HepG2 (cell line): ENCODE measurements at regions of chr1 and their contacts with region 1.

Region 1: DNA sequence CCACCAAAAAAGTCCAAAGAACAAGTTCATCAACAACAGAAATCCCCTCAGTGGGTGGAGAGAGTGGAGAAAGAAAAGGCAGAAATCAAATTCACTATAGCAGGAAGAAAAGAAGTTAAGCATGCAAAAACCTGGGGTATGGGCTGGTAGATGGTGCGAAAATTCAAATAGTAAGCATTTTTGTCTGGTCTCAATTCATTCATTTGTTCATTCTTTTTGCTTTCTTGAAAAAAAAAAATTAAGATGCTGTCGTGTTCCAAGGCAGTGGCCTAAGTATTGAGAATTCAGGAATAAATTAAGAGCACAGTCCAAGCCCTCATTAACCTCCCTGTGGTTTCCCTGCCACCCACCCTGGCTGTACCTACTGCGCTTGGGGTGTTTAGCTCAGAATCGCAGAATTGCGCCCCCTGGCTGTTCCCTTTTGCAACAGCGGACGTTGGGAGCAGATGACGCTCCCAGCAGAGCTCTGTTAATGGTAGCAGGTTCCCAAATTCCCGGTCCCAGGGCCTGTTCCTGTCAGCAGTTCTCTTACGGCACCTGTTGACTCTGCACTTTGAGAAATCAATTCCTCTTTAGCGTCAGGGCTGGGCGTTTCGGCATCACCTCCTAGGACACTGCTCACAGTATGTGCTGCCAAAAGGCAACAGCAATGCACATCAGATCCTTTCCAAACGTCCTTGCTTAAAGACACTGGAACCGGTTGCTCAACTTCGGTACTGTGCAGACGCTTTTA is 34.0 kb upstream of the SSX2IP start:
- DNase-seq: peak; percentile 17
- ATAC-seq: peak; percentile 64
- H3K4me3 ChIP-seq: no peak overlapping the region
- H3K27ac ChIP-seq: no peak overlapping the region
- H3K4me1 ChIP-seq: peaks cover 45% of the 10 kb centered on the region
- H3K27me3 ChIP-seq: no peaks in the 10 kb centered on the region
- CTCF ChIP-seq: peak; percentile 65
- EP300 ChIP-seq: no peak
- POLR2A ChIP-seq: no peak
- RAD21 ChIP-seq: 0 out of 2 replicates have a peak, but pooled peaks have one; percentile 23

Region 2: DNA sequence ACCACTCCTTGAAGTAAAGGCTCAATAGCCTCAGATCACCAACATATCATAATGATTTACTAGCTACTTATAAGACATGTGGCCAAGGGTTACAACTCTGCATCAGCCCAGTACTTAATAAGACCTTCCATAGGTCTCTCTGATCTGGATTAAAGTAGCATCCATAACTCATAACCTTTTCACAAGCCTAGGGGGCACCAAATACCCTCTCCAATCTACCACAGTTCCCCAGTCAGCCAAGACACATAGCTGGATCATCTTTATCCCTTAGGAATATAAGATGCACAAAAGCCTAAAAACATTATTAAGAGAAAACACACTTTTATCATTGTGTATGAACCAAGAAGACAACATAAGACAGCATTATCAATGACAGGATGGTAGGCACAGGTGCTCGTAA is 56.1 kb before region 1 on chr1:
- CTCF ChIA-PET with region 1: interaction called, 5 read pairs
- POLR2A ChIA-PET with region 1: no interaction called
- in situ Hi-C with region 1: no loop called
- intact Hi-C with region 1: loop called (anchors 1 kb)
- DNase-seq: peak; percentile 13
- ATAC-seq: peak; percentile 89
- H3K4me3 ChIP-seq: no peak overlapping the region
- H3K27ac ChIP-seq: no peak overlapping the region
- H3K4me1 ChIP-seq: no peaks in the 10 kb centered on the region
- H3K27me3 ChIP-seq: no peaks in the 10 kb centered on the region
- CTCF ChIP-seq: peak; percentile 46
- EP300 ChIP-seq: no peak
- POLR2A ChIP-seq: no peak
- RAD21 ChIP-seq: no peak

Region 3: GRCh38 chr1:84690397-84691121 is 33.7 kb before region 1 on chr1 and contains the start of gene SSX2IP:
- CTCF ChIA-PET with region 1: no interaction called
- POLR2A ChIA-PET with region 1: interaction called, 4 read pairs
- in situ Hi-C with region 1: no loop called
- intact Hi-C with region 1: loop called (anchors 1 kb)
- DNase-seq: peak; percentile 92
- ATAC-seq: peak; percentile 91
- H3K4me3 ChIP-seq: peak within 1 kb of the TSS; percentile 85 to 90 (median 87)
- H3K27ac ChIP-seq: peak within 1 kb of the TSS; percentile 78
- H3K4me1 ChIP-seq: peaks cover 40% of the 10 kb centered on the region
- H3K27me3 ChIP-seq: no peaks in the 10 kb centered on the region
- CTCF ChIP-seq: no peak; the same call in 1 of the 2 replicates
- EP300 ChIP-seq: 0 out of 4 replicates have a peak, but pooled peaks of 1 of the 2 experiments have one; percentile 26
- POLR2A ChIP-seq: peak; percentile 51 to 59
- RAD21 ChIP-seq: no peak
- total RNA-seq, gene SSX2IP: 23.7 and 38.8 TPM in 2 replicates